ENCODE measurements at regions of chr19 and their contacts with region 1.

Region 1: DNA sequence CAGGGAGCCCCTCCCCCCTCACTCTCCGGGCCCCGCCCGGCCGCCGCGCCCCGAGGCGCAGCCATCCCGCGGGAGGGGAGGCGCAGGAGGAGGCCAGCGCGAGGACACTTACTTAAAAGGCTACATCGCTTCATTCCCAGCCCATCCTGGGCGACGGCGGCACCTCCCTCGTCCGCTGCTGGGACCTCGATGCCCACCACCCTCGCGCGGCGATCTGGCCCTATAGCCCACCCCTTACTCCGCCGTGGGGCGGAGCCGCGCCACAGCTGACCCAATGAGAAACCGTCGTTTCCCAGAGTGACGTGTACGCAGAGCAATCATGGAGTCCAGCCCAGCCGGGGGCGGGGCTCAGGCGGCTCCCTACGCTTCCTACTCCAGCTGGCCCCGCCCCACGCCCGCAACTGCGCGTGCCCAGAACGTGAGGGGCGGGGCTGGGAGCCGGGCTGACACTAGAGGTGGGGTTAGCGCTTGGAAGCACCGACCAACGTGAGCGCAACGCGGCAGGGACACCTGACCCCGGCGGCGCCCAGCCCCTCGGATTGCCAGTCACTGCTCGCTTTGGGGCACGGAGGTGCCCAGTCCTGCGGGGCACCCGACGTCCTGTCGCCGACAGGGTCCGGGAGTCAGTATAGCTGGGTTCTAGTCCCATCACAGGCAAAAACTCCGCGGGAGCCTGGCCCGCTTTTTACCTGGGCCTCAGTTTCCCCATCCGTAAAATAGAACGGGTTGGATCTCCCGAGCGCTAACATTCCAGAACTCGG is at the start of gene ANKRD27:
- DNase-seq: peak; percentile 98
- H3K4me3 Mint-ChIP-seq: peak within 1 kb of the TSS; percentile 87
- H3K27ac Mint-ChIP-seq: peak within 1 kb of the TSS; percentile 67
- H3K4me1 Mint-ChIP-seq: peaks cover 37% of the 10 kb centered on the region
- H3K27me3 Mint-ChIP-seq: peaks cover 16% of the 10 kb centered on the region
- total RNA-seq, gene ANKRD27: 40.4 to 40.6 TPM

Region 2: GRCh38 chr19:32627714-32628270 is 47.3 kb before region 1 on chr19:
- CTCF ChIA-PET with region 1: no interaction called
- POLR2A ChIA-PET with region 1: no interaction called
- DNase-seq: no peak
- H3K4me3 Mint-ChIP-seq: no peak overlapping the region
- H3K27ac Mint-ChIP-seq: no peak overlapping the region
- H3K4me1 Mint-ChIP-seq: no peaks in the 10 kb centered on the region
- H3K27me3 Mint-ChIP-seq: no peaks in the 10 kb centered on the region

Region 3: DNA sequence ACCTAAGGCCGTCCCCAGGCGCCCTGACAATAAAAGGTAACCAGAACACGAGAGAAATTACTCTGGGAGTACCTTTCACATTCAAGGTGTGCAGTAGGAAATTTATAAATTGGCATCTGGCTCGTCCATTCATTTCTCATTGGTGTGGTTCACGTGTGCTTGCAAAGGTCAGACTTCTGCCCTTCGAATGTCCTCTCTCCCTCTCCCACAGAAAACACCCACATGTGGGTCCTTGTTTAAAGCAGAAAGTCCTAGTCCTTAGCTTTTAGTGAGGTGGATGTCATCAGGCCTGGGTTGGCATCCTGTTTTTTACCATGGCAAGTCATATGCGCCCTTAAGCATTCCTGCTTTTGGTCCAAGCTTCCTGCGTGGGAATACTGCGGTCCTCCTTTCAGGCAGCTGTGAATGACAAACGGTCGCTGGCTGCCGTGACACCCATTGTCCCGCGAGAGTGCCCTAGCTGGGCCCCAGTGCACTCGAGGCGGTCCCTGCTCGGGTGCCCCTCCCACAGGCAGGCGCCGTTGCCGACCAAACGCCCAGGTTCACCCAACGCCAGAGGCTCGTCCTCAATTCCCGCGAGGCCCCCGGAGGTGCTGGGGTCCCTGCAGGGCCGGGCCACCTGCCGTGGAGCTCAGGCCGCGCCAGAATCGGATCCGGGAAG is 16.3 kb after region 1 on chr19 and contains the start of gene NUDT19:
- CTCF ChIA-PET with region 1: interaction called, 6 read pairs
- POLR2A ChIA-PET with region 1: interaction called, 34 read pairs
- DNase-seq: peak; percentile 85
- H3K4me3 Mint-ChIP-seq: peak within 1 kb of the TSS; percentile 89
- H3K27ac Mint-ChIP-seq: peak within 1 kb of the TSS; percentile 85
- H3K4me1 Mint-ChIP-seq: peaks cover 50% of the 10 kb centered on the region
- H3K27me3 Mint-ChIP-seq: no peaks in the 10 kb centered on the region
- total RNA-seq, gene NUDT19: 15.0 to 15.1 TPM

Measured in activated CD4-positive, alpha-beta memory T cell treated with anti-CD3 and anti-CD28 coated beads, Interleukin-2, amount 10 ng/mL, durations not matched to agents 7 days and 5 days (primary cell).